GM10248 (cell line): ENCODE measurements at regions of chr15 and their contacts with region 1.

Region 1: DNA sequence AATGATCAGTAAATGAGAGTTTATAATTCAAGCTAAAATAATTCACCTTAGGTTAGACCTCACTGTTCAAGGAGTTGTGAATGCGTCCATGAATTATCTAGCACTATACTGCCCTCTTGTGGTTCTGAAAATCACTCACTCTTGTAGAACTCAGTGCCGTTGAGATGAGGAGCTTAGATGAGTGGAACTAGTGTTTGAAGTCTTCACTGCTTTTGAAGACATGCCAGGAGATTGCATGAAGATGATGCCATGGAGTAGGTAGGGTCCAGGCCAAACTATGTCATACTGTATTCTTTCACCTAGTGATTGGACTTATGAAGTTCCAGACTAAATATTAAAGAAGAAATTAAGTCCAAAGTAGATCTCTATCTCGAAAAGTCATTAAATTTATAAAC is 28.8 kb downstream of the LYSMD4 start:
- DNase-seq: peak; percentile 56
- CTCF ChIP-seq: peak; percentile 60

Region 2: GRCh38 chr15:99282121-99282520 is 422.3 kb before region 1 on chr15:
- CTCF ChIA-PET with region 1: interaction called, 154 read pairs
- POLR2A ChIA-PET with region 1: no interaction called
- DNase-seq: no peak
- CTCF ChIP-seq: no peak

Region 3: DNA sequence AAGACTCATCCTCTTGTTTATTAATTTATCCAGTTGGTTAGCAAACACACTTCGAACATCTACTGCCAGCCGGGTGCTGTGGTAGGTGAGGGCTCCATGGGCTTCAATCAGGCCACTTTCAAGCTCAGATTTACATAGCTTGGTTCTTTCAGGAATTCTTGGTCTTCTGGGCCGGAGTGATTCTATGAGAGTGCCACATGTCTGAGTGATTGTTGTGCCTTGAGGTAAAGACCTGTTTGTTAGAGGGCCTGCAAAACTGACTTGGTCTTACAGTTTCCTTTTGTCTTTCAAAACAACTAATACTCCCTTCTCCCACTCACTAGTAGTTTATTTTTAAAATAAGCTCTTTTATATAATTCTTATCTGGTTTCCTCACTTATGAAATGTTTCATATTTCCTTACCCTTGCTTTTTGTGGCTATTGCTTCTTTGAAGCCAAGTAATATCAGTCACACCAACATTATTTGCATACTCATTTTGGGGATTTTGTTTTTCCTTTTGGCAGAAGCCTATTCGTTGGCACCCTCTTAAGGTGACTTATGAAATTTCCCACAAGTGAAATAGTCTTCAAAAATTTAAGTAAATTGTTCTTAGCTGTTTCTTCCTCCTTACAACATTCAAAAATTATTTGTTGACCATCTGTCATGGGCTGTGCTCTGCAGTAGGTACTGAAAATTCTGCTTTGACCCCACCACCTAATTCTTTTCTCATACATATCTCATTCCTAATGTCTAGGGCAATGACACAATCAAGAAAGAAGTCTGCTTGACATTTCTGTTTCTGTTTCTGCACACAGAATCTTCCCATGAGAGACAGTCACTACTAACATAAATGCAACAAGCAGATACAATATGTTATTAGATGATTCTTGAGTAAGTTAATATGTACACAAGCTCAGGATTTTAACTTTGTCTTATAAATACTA is 333.0 kb before region 1 on chr15:
- CTCF ChIA-PET with region 1: interaction called, 11 read pairs
- POLR2A ChIA-PET with region 1: no interaction called
- DNase-seq: peak; percentile 27
- CTCF ChIP-seq: peak; percentile 21

Region 4: GRCh38 chr15:99507504-99508310 is 196.7 kb before region 1 on chr15:
- CTCF ChIA-PET with region 1: interaction called, 24 read pairs
- POLR2A ChIA-PET with region 1: no interaction called
- DNase-seq: peak; percentile 40
- CTCF ChIP-seq: no peak

Region 5: DNA sequence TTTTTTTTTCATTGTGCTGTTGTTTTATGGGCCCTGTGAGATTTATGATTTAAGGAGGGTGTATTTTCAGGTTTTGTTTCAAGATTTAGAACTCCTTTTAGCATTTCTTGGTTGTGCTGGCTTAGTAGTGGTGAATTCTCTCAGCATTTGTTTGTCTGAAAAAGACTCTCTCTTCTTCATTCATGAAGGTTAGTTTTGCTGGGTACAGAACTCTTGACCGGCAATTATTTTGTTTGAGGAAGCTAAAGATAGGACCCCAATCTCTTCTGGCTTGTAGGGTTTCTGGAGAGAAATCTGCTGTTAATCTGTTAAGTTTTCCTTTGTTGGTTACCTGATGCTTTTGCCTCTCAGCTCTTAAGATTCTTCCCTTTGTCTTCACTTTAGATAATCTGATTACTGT is 18.2 kb before region 1 on chr15:
- CTCF ChIA-PET with region 1: interaction called, 23 read pairs
- POLR2A ChIA-PET with region 1: no interaction called
- DNase-seq: no peak
- CTCF ChIP-seq: no peak

Region 6: DNA sequence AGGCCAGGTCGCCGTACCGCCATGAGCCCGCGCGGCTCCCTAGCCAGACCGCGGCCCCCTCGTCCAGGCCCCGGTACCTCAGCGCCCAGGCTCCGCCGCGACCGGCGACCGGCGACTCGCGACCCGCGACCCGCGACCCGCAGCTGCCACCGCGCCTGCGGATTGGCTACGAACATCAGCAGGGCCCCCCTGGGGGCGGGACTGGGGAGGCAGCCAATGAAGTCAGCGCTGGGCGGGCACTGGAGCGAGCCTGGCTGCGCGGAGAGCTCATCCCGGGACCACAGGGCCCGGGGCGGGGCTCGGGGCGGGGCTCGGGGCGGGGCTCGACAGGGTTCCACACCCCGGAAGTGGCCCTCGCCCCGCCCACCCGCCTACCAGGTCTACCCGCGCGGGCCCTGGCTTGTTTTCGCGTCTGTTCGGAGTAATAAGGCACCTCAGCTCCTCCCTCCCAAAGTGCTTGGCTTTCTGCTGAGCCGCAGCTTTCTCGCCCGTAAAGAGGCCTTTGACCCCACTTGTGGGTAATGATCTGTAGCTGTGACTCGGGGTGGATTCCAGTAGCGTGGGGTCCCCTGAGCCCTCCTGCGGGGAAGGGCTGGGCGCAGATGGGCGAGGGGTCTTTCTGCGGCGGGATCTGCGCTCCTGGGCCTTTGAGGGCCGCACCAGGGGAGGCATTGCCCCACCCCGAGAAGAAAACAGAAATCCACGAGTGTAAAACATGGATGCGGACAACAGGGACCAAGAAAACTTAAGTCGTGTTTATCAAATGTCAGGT is 29.0 kb after region 1 on chr15 and contains the start of gene LYSMD4:
- CTCF ChIA-PET with region 1: interaction called, 18 read pairs
- POLR2A ChIA-PET with region 1: no interaction called
- DNase-seq: peak; percentile 100
- CTCF ChIP-seq: no peak